ENCODE measurements at regions of chr1 and their contacts with region 1.

Region 1: GRCh38 chr1:9874959-9875635 is 35.0 kb downstream of the CTNNBIP1 start:
- DNase-seq: peak; percentile 78
- ATAC-seq: peak; percentile 87 to 89

Region 2: DNA sequence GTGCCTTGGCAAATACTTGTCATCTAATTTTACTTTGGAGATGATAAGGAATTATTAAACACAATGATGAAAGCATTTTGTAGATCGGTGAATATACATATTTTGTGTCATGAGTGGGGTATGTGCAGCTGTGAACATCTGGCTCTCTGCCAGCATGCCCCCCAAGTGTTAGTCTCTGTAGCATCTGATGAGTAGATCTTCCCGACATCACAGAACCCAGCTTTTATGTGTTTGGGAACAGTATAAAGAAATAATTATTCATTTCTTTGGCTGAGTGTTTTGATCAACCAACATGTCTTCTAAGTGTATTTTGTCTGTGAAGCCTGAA is 39.5 kb after region 1 on chr1:
- intact Hi-C with region 1: loop called in 1 of 2 experiments (anchors 1 kb)
- DNase-seq: no peak
- ATAC-seq: no peak

Region 3: GRCh38 chr1:9929431-9930385 is 54.6 kb after region 1 on chr1:
- intact Hi-C with region 1: no loop called
- DNase-seq: no peak
- ATAC-seq: peak in 1 of 2 donors; percentile 19

Region 4: DNA sequence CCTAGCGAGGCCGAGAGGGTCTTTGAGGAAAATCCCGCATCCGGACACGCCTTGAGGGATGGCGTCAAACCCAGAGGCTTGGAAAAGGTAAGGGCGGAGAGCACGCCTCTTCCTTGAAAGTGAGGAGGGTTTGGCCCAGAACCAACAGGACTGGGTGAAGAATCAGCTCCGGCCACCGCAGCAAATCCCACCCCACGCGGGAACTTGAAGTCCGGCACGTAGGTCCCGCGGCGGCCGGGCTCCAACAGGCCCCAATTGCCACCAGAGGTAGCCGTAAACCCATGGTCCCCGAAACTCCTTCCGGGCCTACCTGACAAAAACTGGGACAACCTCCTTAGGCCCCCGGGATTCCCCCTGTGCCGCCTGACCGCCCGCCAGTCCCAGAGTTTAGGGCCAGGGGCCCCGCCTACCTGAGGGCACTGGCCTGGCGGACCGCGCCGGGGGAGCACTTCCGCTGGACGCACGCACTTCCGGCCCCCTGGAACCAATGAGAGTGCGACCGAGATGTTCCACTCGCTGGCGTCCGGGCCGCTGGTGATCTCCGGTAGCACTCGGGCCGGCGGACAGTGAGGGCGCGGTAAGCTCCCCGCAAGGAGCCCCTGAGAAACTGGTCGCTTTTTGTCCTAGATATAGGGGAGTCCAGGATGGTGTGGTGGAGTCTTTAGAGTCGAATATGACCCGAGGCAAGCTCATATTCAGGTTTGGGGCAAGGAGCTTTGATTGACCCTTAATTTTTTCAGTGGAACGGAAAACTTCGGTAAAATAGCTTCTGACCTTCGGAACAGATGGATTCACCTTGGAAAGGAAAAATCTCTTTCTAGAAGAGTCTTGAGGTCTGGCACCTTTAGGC is 68.1 kb after region 1 on chr1 and contains the starts of genes LZIC and NMNAT1:
- intact Hi-C with region 1: loop called in 1 of 2 experiments (anchors 2 kb)
- DNase-seq: peak; percentile 96
- ATAC-seq: peak; percentile 100
- total RNA-seq, gene LZIC: 27.1 to 31.2 TPM
- total RNA-seq, gene NMNAT1: 14.9 to 19.1 TPM